Dendritic cell treated with granulocyte-macrophage colony-stimulating factor and Interleukin-4, amounts not matched to agents 40 ng/mL and 50 ng/mL, for 4 days (primary cell): ENCODE measurements at regions of chr17 and their contacts with region 1.

Region 1: DNA sequence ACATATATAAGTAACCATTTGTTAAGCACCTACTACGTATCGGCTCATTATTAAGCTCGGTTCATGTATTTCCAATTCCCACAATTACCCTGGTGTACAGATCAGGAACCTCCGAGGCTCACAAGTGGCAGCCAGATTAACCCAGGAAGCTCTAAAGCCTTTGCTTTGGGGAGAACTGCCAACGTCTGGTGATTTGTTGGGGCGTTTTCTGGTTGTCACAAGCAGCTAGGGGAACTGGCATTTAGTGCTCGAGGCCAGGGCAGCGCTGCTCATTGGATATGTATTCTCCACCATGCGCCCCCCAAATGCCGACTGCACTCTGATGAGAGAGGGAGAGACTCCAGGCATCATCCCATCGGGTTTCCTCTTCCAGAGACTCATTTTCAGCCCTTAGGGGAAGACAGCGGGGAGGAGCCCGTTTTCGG is 541 bp downstream of the ZNF18 start:
- H3K4me3 Mint-ChIP-seq: peak overlapping the region; percentile 90
- H3K27ac Mint-ChIP-seq: peak overlapping the region; percentile 90
- H3K4me1 Mint-ChIP-seq: peaks cover 17% of the 10 kb centered on the region
- H3K27me3 Mint-ChIP-seq: no peaks in the 10 kb centered on the region

Region 2: GRCh38 chr17:11948789-11949188 is 47.9 kb before region 1 on chr17:
- intact Hi-C with region 1: no loop called
- H3K4me3 Mint-ChIP-seq: no peak overlapping the region
- H3K27ac Mint-ChIP-seq: no peak overlapping the region
- H3K4me1 Mint-ChIP-seq: no peaks in the 10 kb centered on the region
- H3K27me3 Mint-ChIP-seq: no peaks in the 10 kb centered on the region

Region 3: GRCh38 chr17:12020642-12021622 is 24.2 kb after region 1 on chr17 and contains the start of gene MAP2K4:
- intact Hi-C with region 1: loop called (anchors 1 kb)
- H3K4me3 Mint-ChIP-seq: peak within 1 kb of the TSS; percentile 74
- H3K27ac Mint-ChIP-seq: peak within 1 kb of the TSS; percentile 60
- H3K4me1 Mint-ChIP-seq: peaks cover 29% of the 10 kb centered on the region
- H3K27me3 Mint-ChIP-seq: peaks cover 15% of the 10 kb centered on the region

Region 4: DNA sequence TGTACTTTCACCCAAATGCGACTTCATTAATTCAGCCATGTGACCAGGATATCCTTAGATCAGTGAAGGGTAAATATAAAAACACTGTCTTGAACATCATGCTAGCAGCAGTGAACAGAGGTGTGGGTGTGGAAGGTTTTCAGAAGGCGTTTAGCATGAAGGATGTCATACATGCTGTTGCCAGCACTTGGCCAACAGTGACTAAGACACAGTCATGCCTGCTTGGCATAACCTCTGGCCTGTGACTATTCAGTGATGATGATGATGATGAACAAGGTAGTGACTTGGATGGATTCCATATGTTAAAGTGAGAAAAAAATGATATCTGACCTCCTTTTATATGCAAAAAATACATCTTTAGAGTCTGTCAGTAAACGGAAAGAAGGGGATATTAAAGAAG is 121.9 kb after region 1 on chr17:
- intact Hi-C with region 1: no loop called
- H3K4me3 Mint-ChIP-seq: no peak overlapping the region
- H3K27ac Mint-ChIP-seq: no peak overlapping the region
- H3K4me1 Mint-ChIP-seq: no peaks in the 10 kb centered on the region
- H3K27me3 Mint-ChIP-seq: no peaks in the 10 kb centered on the region